A549 (cell line): ENCODE measurements at regions of chr11 and their contacts with region 1.

Region 1: GRCh38 chr11:19553683-19554333 is 158.8 kb upstream of the NAV2 start:
- DNase-seq: peak; percentile 57 to 67
- ATAC-seq: peak; percentile 70 to 90
- H3K4me3 ChIP-seq: no peak overlapping the region
- H3K27ac ChIP-seq: no peak overlapping the region
- H3K4me1 ChIP-seq: no peaks in the 10 kb centered on the region
- CTCF ChIP-seq: peak; percentile 92
- EP300 ChIP-seq: no peak
- POLR2A ChIP-seq: no peak
- RAD21 ChIP-seq: peak; percentile 98

Region 2: DNA sequence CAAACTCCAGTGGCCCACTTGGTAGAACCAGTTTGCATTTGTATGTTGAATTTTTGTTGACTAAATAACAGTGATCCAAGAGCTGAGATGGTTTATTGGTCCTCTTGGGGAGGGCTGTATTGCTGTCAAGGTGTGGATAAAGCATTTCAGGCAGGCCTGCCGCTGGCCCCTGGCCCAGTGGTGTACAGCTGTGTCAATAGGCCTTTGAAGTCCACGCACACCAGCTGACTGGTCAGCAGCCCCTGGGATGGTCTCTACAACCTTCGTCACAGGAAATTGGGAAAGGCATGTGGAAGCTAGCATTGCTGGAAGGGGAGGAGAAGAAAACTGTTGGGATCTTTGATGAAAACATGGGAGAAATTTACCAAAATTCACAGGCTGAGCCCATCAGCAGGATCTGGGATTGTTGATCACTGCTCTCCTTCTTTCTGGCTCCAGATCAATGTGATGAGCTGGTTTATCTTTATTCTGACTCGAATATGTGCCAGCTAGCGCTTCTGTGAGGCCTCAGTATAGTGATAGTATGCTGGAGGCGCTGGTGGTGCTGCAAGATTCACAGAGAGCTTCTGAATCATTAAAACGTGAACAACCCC is 300.6 kb before region 1 on chr11:
- CTCF ChIA-PET with region 1: interaction called, 104 read pairs
- POLR2A ChIA-PET with region 1: no interaction called
- DNase-seq: no peak
- ATAC-seq: no peak
- H3K4me3 ChIP-seq: no peak overlapping the region
- H3K27ac ChIP-seq: no peak overlapping the region
- H3K4me1 ChIP-seq: no peaks in the 10 kb centered on the region
- CTCF ChIP-seq: no peak
- EP300 ChIP-seq: no peak
- POLR2A ChIP-seq: no peak
- RAD21 ChIP-seq: no peak

Region 3: DNA sequence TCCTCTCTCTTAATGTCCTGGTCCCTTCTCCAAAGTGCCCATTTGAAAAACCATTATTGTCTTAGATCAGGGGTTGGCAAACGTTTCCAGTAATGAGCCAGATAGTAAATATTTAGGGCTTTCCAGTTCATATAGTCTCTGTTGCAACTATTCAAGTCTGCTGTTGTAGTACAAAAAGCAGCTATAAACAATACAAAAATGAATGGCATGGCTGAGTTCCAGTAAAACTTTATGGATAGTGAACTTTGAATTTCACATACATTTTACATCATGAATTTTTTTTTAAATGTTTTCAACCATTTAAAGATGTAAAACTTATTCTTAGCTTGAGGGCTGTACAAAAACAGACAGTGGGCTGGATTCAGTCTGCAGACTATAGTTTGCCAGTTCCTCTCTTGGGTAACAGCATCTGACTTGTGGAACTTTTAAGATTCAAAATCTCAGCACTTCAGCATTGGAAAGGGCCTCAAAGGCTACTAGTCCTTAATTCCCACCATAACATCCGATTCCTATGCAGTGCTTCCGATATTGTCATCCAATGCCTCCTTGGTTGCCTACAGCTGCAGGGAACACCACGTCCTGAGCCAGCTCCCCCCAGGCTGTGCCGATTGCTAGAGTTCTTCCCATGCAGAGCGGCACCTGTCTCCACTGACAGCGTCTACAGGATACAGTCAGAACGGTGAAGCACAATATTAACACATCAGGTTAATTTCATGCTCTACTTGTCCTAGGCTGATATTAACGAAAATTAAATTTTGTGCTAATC is 247.4 kb before region 1 on chr11:
- CTCF ChIA-PET with region 1: interaction called, 18 read pairs
- POLR2A ChIA-PET with region 1: no interaction called
- DNase-seq: no peak
- ATAC-seq: no peak
- H3K4me3 ChIP-seq: no peak overlapping the region
- H3K27ac ChIP-seq: no peak overlapping the region
- H3K4me1 ChIP-seq: no peaks in the 10 kb centered on the region
- CTCF ChIP-seq: no peak
- EP300 ChIP-seq: no peak
- POLR2A ChIP-seq: no peak
- RAD21 ChIP-seq: no peak

Region 4: DNA sequence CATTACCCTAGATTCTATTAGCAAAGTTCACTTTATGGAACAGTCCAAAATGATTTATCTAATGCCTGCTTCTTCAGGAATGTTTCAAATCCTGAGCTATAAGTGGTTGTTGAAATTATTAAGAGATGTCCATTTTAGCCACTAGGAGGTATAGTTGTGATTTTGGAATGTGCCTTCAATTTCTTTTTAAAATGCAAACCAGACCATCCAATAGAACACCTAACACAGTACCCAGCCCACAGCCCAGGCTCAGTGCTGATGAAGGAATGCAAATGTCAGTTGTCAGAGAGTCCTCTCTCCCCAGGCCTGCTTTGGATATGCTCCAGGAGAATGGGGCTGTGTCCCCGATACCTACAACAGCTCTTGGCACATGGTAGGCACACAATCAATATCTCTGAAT is 227.3 kb before region 1 on chr11:
- CTCF ChIA-PET with region 1: interaction called, 40 read pairs
- POLR2A ChIA-PET with region 1: no interaction called
- DNase-seq: peak in 1 of 2 experiments; percentile 17
- ATAC-seq: peak in 1 of 2 experiments; percentile 59; a peak in 3 of 6 replicates
- H3K4me3 ChIP-seq: no peak overlapping the region
- H3K27ac ChIP-seq: no peak overlapping the region
- H3K4me1 ChIP-seq: no peaks in the 10 kb centered on the region
- CTCF ChIP-seq: peak; percentile 28; the same call in 2 of the 3 replicates
- EP300 ChIP-seq: no peak
- POLR2A ChIP-seq: no peak
- RAD21 ChIP-seq: peak; percentile 41 to 45

Region 5: GRCh38 chr11:19539861-19540260 is 13.9 kb before region 1 on chr11:
- CTCF ChIA-PET with region 1: interaction called, 52 read pairs
- POLR2A ChIA-PET with region 1: no interaction called
- DNase-seq: no peak
- ATAC-seq: no peak
- H3K4me3 ChIP-seq: no peak overlapping the region
- H3K27ac ChIP-seq: no peak overlapping the region
- H3K4me1 ChIP-seq: no peaks in the 10 kb centered on the region
- CTCF ChIP-seq: no peak
- EP300 ChIP-seq: no peak
- POLR2A ChIP-seq: no peak
- RAD21 ChIP-seq: no peak

Region 6: DNA sequence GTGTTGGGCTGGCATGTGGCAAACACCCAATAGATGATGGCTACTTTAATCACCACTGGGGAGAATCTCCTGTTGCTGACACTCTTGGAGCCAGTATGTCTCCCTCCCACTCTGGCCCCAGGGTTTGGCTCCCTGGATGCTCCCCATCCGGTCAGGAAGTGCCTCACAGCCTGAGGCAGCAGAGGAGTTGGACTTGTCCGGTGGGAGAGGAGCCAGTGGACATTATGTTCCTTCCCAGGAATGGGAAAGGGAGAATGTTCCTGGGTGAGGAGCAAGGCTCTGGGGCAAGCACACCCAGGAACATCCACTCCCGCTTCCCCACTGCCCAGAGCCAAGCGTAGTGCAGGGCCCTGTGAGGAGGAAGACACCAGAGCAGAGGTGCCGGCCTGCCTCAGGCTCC is 74.2 kb after region 1 on chr11:
- CTCF ChIA-PET with region 1: no interaction called
- POLR2A ChIA-PET with region 1: no interaction called
- DNase-seq: no peak
- ATAC-seq: no peak
- H3K4me3 ChIP-seq: no peak overlapping the region
- H3K27ac ChIP-seq: no peak overlapping the region
- H3K4me1 ChIP-seq: no peaks in the 10 kb centered on the region
- CTCF ChIP-seq: no peak
- EP300 ChIP-seq: no peak
- POLR2A ChIP-seq: no peak
- RAD21 ChIP-seq: no peak

Region 7: DNA sequence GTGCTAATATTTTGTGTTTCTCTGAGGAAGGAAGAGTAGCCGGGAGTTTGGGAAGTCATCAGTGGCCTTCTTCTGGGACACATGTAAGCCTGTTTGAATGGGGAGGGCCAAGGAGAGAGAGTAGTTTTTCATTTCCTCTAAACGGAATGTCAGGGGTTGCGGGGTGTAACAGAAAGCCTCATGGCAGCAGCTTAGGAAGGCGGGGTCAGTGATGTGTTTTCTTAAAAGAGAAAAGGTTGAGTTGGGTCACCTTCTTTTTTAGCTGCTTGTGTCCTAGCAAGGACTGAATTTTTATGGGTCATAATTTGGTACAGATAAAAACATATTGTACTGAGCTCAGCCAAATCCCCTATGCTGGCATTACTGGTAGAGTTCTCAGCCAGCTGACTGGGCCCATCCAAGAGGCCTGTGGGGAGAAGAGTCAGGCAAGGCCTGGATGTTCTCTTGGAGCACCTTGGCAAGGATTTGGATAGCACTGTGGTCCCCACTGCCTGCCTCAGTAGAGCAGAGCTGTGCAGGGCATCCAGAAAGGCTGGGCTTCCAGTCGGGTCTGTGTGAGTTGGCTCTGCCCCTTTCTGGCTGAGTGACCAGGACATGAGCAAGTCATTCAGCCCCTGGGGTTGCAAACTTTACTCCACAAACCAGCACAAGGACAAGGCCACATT is 129.5 kb after region 1 on chr11:
- CTCF ChIA-PET with region 1: no interaction called
- POLR2A ChIA-PET with region 1: no interaction called
- DNase-seq: no peak
- ATAC-seq: no peak
- H3K4me3 ChIP-seq: no peak overlapping the region
- H3K27ac ChIP-seq: peak overlapping the region in 1 of 2 experiments; percentile 55; a peak in 2 of 6 replicates
- H3K4me1 ChIP-seq: peaks cover 32% of the 10 kb centered on the region
- CTCF ChIP-seq: no peak
- EP300 ChIP-seq: no peak
- POLR2A ChIP-seq: no peak
- RAD21 ChIP-seq: no peak

Region 8: GRCh38 chr11:20080032-20080685 is 526.4 kb after region 1 on chr11:
- CTCF ChIA-PET with region 1: no interaction called
- POLR2A ChIA-PET with region 1: no interaction called
- DNase-seq: no peak
- ATAC-seq: no peak; a peak in 1 of 6 replicates
- H3K4me3 ChIP-seq: no peak overlapping the region
- H3K27ac ChIP-seq: no peak overlapping the region
- H3K4me1 ChIP-seq: no peaks in the 10 kb centered on the region
- CTCF ChIP-seq: no peak
- EP300 ChIP-seq: no peak
- POLR2A ChIP-seq: no peak
- RAD21 ChIP-seq: no peak